ENCODE measurements at regions of chr10 and their contacts with region 1.

Region 1: DNA sequence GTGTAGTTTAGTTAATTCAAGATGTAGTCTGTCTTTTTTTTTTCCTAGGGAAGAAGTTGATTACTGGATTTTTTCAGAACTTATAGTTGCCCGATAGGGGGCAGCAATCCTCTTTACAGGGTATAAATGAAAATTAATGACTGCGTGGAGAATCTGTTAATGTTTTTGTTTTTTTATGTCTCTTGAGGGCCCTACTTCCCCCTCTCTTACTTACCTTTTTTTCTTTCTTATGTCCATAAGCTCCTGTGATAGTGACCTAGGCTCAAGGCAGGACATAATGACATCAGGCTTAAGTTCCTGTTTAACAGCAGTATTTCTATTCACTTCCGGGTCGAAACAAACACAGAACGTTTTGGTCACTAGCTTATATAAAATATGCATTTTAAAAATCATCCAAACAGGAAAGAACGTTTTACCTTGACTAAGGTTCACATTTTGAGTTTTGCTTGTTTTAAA is 18.8 kb downstream of the CDC123 start:
- DNase-seq: peak; percentile 15
- H3K4me3 Mint-ChIP-seq: peak overlapping the region; percentile 41
- H3K27ac Mint-ChIP-seq: peak overlapping the region; percentile 79
- H3K4me1 Mint-ChIP-seq: peaks cover 16% of the 10 kb centered on the region
- H3K27me3 Mint-ChIP-seq: no peaks in the 10 kb centered on the region

Region 2: GRCh38 chr10:12187321-12187905 is 27.4 kb before region 1 on chr10:
- CTCF ChIA-PET with region 1: no interaction called
- POLR2A ChIA-PET with region 1: no interaction called
- intact Hi-C with region 1: no loop called
- DNase-seq: no peak
- H3K4me3 Mint-ChIP-seq: no peak overlapping the region
- H3K27ac Mint-ChIP-seq: peak overlapping the region; percentile 82
- H3K4me1 Mint-ChIP-seq: peaks cover 50% of the 10 kb centered on the region
- H3K27me3 Mint-ChIP-seq: no peaks in the 10 kb centered on the region

Region 3: DNA sequence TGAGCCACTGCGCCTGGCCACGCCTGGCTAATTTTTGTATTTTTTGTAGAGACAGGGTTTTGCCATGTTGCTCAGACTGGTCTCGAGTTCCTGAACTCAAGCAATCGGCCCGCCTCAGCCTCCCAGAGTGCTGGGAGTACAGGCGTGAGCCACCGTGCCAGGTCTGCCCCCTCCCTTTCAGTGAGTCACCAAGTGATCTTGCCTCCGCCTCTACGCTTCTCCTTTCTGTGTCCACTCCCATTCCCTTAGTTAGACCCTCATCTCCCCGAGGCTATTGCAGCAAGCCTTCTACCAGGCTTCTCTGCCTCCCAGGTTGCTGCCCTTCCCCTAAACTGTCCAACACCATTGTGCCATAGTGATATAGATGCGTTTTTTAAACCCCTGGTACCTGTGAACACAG is 14.1 kb after region 1 on chr10:
- CTCF ChIA-PET with region 1: interaction called, 17 read pairs
- POLR2A ChIA-PET with region 1: no interaction called
- intact Hi-C with region 1: no loop called
- DNase-seq: no peak
- H3K4me3 Mint-ChIP-seq: no peak overlapping the region
- H3K27ac Mint-ChIP-seq: no peak overlapping the region
- H3K4me1 Mint-ChIP-seq: no peaks in the 10 kb centered on the region
- H3K27me3 Mint-ChIP-seq: no peaks in the 10 kb centered on the region

Measured in activated CD4-positive, alpha-beta memory T cell treated with anti-CD3 and anti-CD28 coated beads for 36 hours (primary cell).